Heart right ventricle (tissue), 16 donors: ENCODE measurements at regions of chr11 and their contacts with region 1.

Region 1: DNA sequence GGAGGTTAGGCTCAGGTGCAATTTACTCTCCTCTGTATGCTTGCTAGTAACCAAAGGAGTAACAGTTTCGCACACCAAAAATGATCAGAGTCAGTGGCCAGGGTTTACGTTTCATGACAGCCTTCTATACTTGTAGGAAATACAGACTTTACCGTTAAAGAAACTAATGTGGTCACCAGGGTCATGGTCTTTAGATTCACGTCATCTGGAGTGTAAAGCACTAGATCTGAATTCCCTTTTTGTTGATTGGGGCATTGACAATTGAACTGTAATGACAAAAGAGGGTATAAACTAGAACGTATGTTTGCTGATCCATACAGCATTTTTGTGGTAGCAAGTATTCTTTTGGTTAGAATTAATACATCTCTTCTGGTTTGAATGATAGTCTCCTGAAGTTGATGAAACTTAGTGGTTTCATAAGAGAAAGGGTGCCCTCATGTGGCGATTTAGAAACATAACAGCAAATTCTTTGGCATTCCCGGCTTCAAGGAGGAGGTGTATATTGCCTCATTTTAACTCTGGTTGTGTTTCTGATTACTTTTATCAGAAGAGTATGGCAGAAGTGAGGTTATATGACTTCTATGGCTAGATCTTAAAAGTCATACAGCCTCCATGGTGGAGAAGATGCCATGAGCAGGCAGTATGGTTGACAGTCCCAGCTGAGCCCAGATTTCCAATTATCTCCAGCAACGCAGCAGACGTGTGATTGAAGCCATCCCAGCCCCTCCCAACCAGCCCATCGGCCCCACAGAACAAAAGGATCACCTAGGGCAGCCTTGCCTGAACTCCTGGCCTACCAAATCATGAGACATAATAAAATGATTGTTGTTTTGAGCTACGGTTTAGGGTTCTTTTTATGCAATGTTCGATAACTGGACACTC is 35.1 kb downstream of the MMP7 start:
- DNase-seq: peak in 1 of 2 donors; percentile 60
- ATAC-seq: peak in 7 of 8 donors; percentile 67 to 83 (median 76)
- H3K4me3 ChIP-seq: no peak overlapping the region
- H3K27ac ChIP-seq: no peak overlapping the region
- H3K4me1 ChIP-seq: peaks cover 0 to 6% (median 0%) of the 10 kb centered on the region in 9 donors
- H3K27me3 ChIP-seq: peaks cover 0 to 29% (median 0%) of the 10 kb centered on the region in 7 donors
- CTCF ChIP-seq: peak; percentile 36 to 84 (median 72)

Region 2: GRCh38 chr11:102287964-102288724 is 207.3 kb before region 1 on chr11:
- intact Hi-C with region 1: loop called (anchors 1 to 10 kb)
- DNase-seq: peak in 1 of 2 donors; percentile 55
- ATAC-seq: peak; percentile 74 to 92 (median 86)
- H3K4me3 ChIP-seq: peak overlapping the region in 5 of 10 donors; percentile 27 to 38 (median 28)
- H3K27ac ChIP-seq: no peak overlapping the region
- H3K4me1 ChIP-seq: peaks cover 0 to 16% (median 4%) of the 10 kb centered on the region in 9 donors
- H3K27me3 ChIP-seq: no peaks in the 10 kb centered on the region
- CTCF ChIP-seq: peak; percentile 36 to 85 (median 77)

Region 3: GRCh38 chr11:102293873-102294601 is 201.4 kb before region 1 on chr11:
- intact Hi-C with region 1: loop called in 8 of 10 experiments (anchors 2 to 10 kb)
- DNase-seq: no peak
- ATAC-seq: peak in 3 of 8 donors; percentile 55 to 73 (median 72)
- H3K4me3 ChIP-seq: peak overlapping the region in 1 of 10 donors; percentile 23
- H3K27ac ChIP-seq: no peak overlapping the region
- H3K4me1 ChIP-seq: peaks cover 0 to 10% (median 0%) of the 10 kb centered on the region in 9 donors
- H3K27me3 ChIP-seq: no peaks in the 10 kb centered on the region
- CTCF ChIP-seq: peak; percentile 23 to 77 (median 60)

Region 4: GRCh38 chr11:102317099-102317767 is 178.2 kb before region 1 on chr11 and contains the start of gene BIRC3:
- intact Hi-C with region 1: no loop called
- DNase-seq: peak; percentile 69 to 83
- ATAC-seq: peak; percentile 93 to 97 (median 96)
- H3K4me3 ChIP-seq: peak within 1 kb of the TSS in 9 of 10 donors; percentile 44 to 72 (median 59)
- H3K27ac ChIP-seq: peak within 1 kb of the TSS; percentile 32 to 85 (median 59)
- H3K4me1 ChIP-seq: peaks cover 0 to 69% (median 17%) of the 10 kb centered on the region in 9 donors
- H3K27me3 ChIP-seq: no peaks in the 10 kb centered on the region
- CTCF ChIP-seq: peak in 5 of 9 donors; percentile 33 to 52 (median 42)
- total RNA-seq, gene BIRC3: 1.5 to 16.5 (median 5.7) TPM

Region 5: DNA sequence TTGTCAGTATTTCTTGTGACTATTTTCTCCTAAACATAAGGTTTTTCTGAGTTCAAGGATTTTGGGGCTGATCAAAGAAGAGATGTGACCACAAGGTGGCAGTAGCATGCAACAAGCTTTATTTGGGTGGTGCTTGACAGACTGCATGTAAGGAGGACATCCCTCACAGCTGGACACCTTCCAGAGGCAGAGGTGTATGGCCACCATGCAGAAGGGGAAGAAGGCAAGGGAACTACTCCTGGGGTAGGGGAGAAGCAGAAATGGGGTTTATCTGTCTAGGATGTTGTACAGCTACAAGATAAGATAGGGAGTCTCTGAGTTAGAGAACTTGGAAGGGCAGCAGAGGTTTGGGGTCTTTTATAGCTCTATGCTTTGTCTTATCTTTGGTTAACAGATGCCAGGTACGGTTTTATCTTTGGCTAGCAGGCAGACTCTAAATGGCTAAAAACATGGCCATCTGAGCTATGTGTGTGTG is 153.5 kb before region 1 on chr11:
- intact Hi-C with region 1: loop called (anchors 1 to 5 kb)
- DNase-seq: peak; percentile 24 to 82
- ATAC-seq: peak; percentile 43 to 74 (median 63)
- H3K4me3 ChIP-seq: no peak overlapping the region
- H3K27ac ChIP-seq: no peak overlapping the region
- H3K4me1 ChIP-seq: peaks cover 0 to 12% (median 8%) of the 10 kb centered on the region in 9 donors
- H3K27me3 ChIP-seq: no peaks in the 10 kb centered on the region
- CTCF ChIP-seq: peak; percentile 58 to 88 (median 83)

Region 6: GRCh38 chr11:102390667-102391465 is 104.5 kb before region 1 on chr11:
- intact Hi-C with region 1: loop called in 8 of 10 experiments (anchors 2 to 5 kb)
- DNase-seq: peak; percentile 44 to 57
- ATAC-seq: peak; percentile 76 to 88 (median 86)
- H3K4me3 ChIP-seq: no peak overlapping the region
- H3K27ac ChIP-seq: no peak overlapping the region
- H3K4me1 ChIP-seq: peaks cover 0 to 5% (median 0%) of the 10 kb centered on the region in 9 donors
- H3K27me3 ChIP-seq: no peaks in the 10 kb centered on the region
- CTCF ChIP-seq: peak; percentile 71 to 87 (median 83)

Region 7: GRCh38 chr11:102396708-102397563 is 98.5 kb before region 1 on chr11:
- intact Hi-C with region 1: loop called in 6 of 10 experiments (anchors 5 kb)
- DNase-seq: no peak
- ATAC-seq: peak in 1 of 8 donors; percentile 39
- H3K4me3 ChIP-seq: no peak overlapping the region
- H3K27ac ChIP-seq: no peak overlapping the region
- H3K4me1 ChIP-seq: peaks cover 0 to 11% (median 4%) of the 10 kb centered on the region in 9 donors
- H3K27me3 ChIP-seq: no peaks in the 10 kb centered on the region
- CTCF ChIP-seq: no peak

Region 8: DNA sequence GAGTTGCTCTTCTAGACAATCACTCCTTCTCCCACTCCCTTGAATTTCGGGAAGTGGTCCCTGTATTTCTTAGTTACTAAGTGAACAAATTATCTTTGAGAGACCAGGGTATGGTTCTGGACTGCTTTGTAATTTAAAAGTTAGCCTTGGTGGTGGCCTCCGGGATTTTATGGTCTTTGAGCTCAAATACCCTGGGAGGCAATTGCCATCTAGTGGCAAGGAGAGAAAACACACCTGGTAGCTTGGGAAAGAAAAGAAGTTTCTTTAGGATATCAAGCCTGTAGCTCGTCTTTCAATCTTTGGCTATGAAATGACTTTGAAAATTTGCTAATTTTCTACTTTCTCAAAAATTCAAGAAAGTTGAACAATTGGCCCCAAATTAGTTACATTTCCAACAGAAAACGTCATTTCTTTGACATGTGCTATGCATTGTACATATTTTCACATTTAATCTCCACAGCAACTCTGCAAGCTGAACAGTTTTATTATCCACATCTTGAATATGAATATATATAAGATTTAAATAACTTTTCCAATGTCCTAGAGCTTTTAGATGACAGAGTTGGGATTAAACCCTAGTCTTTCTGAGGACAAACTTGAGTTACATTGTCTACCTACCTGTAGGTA is 171.0 kb after region 1 on chr11:
- intact Hi-C with region 1: loop called in 1 of 10 experiments (anchors 5 kb)
- DNase-seq: no peak
- ATAC-seq: peak in 1 of 8 donors; percentile 33
- H3K4me3 ChIP-seq: no peak overlapping the region
- H3K27ac ChIP-seq: no peak overlapping the region
- H3K4me1 ChIP-seq: no peaks in the 10 kb centered on the region
- H3K27me3 ChIP-seq: peaks cover 0 to 6% (median 4%) of the 10 kb centered on the region in 7 donors
- CTCF ChIP-seq: peak; percentile 25 to 81 (median 64)